ENCODE measurements at regions of chr14 and their contacts with region 1.

Region 1: GRCh38 chr14:69090187-69090789 is 62.6 kb downstream of the DCAF5 start:
- DNase-seq: no peak
- ATAC-seq: no peak
- H3K4me3 Mint-ChIP-seq: no peak overlapping the region
- H3K27ac Mint-ChIP-seq: no peak overlapping the region
- H3K4me1 Mint-ChIP-seq: no peaks in the 10 kb centered on the region
- H3K27me3 Mint-ChIP-seq: no peaks in the 10 kb centered on the region
- CTCF ChIP-seq: no peak

Region 2: GRCh38 chr14:67883717-67884116 is 1206.6 kb before region 1 on chr14:
- CTCF ChIA-PET with region 1: interaction called, 5 read pairs
- POLR2A ChIA-PET with region 1: no interaction called
- intact Hi-C with region 1: loop called (anchors 5 kb)
- DNase-seq: no peak
- ATAC-seq: no peak
- H3K4me3 Mint-ChIP-seq: no peak overlapping the region
- H3K27ac Mint-ChIP-seq: no peak overlapping the region
- H3K4me1 Mint-ChIP-seq: peaks cover 4% of the 10 kb centered on the region
- H3K27me3 Mint-ChIP-seq: no peaks in the 10 kb centered on the region
- CTCF ChIP-seq: no peak

Region 3: DNA sequence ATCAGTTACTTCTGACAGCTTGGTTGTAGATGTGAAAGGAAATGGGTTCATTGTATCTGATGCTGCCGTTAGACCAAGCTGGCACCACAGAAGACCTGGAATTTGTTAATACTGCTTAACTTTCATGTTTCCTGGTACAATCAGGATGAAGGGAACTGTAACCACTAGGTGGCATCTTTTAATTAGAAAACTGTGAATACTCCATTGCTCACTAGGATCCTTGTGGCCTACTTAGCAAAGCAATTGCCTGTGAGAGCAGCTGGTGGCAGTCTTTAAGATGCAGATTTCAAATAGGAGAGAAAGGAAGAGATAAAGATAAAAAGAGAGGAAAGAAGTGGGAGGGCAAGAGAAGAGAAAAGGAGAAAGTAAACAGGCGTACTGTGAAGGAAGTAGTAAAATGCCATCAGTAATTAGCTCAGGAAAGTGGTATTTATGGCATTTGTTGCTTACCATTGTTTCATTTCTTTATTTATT is 1156.2 kb before region 1 on chr14:
- CTCF ChIA-PET with region 1: interaction called, 14 read pairs
- POLR2A ChIA-PET with region 1: no interaction called
- intact Hi-C with region 1: loop called (anchors 5 kb)
- DNase-seq: no peak
- ATAC-seq: peak; percentile 77
- H3K4me3 Mint-ChIP-seq: no peak overlapping the region
- H3K27ac Mint-ChIP-seq: no peak overlapping the region
- H3K4me1 Mint-ChIP-seq: peaks cover 4% of the 10 kb centered on the region
- H3K27me3 Mint-ChIP-seq: no peaks in the 10 kb centered on the region
- CTCF ChIP-seq: no peak

Region 4: GRCh38 chr14:68862954-68863594 is 227.2 kb before region 1 on chr14:
- CTCF ChIA-PET with region 1: interaction called, 8 read pairs
- POLR2A ChIA-PET with region 1: no interaction called
- intact Hi-C with region 1: loop called (anchors 5 kb)
- DNase-seq: peak; percentile 26
- ATAC-seq: no peak
- H3K4me3 Mint-ChIP-seq: no peak overlapping the region
- H3K27ac Mint-ChIP-seq: no peak overlapping the region
- H3K4me1 Mint-ChIP-seq: peaks cover 3% of the 10 kb centered on the region
- H3K27me3 Mint-ChIP-seq: no peaks in the 10 kb centered on the region
- CTCF ChIP-seq: peak; percentile 17

Region 5: GRCh38 chr14:68911594-68912227 is 178.6 kb before region 1 on chr14:
- CTCF ChIA-PET with region 1: no interaction called
- POLR2A ChIA-PET with region 1: no interaction called
- intact Hi-C with region 1: loop called (anchors 5 kb)
- DNase-seq: peak; percentile 37
- ATAC-seq: peak; percentile 91
- H3K4me3 Mint-ChIP-seq: no peak overlapping the region
- H3K27ac Mint-ChIP-seq: no peak overlapping the region
- H3K4me1 Mint-ChIP-seq: peaks cover 8% of the 10 kb centered on the region
- H3K27me3 Mint-ChIP-seq: peaks cover 6% of the 10 kb centered on the region
- CTCF ChIP-seq: peak; percentile 66

Region 6: DNA sequence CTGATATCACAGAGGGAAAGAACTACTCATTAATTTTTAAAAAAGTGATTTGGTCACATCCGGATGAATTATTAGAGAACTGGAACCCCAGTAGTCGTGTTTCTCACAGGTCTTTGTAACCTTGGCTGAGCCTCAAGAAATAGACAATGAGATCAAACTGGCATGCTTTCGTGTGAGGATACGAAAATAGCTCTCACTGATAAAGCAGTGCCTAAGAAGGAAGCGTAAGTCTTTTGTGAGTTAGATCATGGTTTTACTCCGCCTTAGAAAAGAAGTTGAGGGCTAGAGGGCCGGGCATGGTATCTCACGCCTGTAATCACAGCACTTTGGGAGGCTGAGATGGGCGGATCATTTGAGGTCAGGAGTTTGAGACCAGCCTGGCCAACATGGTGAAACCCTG is 135.9 kb after region 1 on chr14:
- CTCF ChIA-PET with region 1: no interaction called
- POLR2A ChIA-PET with region 1: no interaction called
- intact Hi-C with region 1: no loop called
- DNase-seq: no peak
- ATAC-seq: no peak
- H3K4me3 Mint-ChIP-seq: no peak overlapping the region
- H3K27ac Mint-ChIP-seq: no peak overlapping the region
- H3K4me1 Mint-ChIP-seq: no peaks in the 10 kb centered on the region
- H3K27me3 Mint-ChIP-seq: no peaks in the 10 kb centered on the region
- CTCF ChIP-seq: no peak

Region 7: GRCh38 chr14:69493791-69494190 is 403.5 kb after region 1 on chr14:
- CTCF ChIA-PET with region 1: no interaction called
- POLR2A ChIA-PET with region 1: no interaction called
- intact Hi-C with region 1: no loop called
- DNase-seq: no peak
- ATAC-seq: no peak
- H3K4me3 Mint-ChIP-seq: no peak overlapping the region
- H3K27ac Mint-ChIP-seq: no peak overlapping the region
- H3K4me1 Mint-ChIP-seq: no peaks in the 10 kb centered on the region
- H3K27me3 Mint-ChIP-seq: peaks cover 29% of the 10 kb centered on the region
- CTCF ChIP-seq: no peak

Measured in activated B cell treated with CpG ODN at 0.5 μM for 24 hours (primary cell).